Stomach (tissue), 19 donors: ENCODE measurements at regions of chr2 and their contacts with region 1.

Region 1: GRCh38 chr2:229586746-229587705 is 127.3 kb downstream of the DNER start:
- DNase-seq: peak; percentile 75 to 90
- H3K4me3 ChIP-seq: peak overlapping the region; percentile 5 to 26 (median 22)
- H3K27ac ChIP-seq: peak overlapping the region in 1 of 5 donors; percentile 49
- H3K4me1 ChIP-seq: peaks cover 3 to 9% (median 5%) of the 10 kb centered on the region in 4 donors
- H3K27me3 ChIP-seq: peaks cover 0 to 22% (median 0%) of the 10 kb centered on the region in 3 donors
- CTCF ChIP-seq: peak in 5 of 7 experiments; percentile 66 to 80 (median 76)
- EP300 ChIP-seq: no peak
- POLR2A ChIP-seq: no peak

Region 2: GRCh38 chr2:229133155-229133772 is 453.8 kb before region 1 on chr2:
- intact Hi-C with region 1: loop called (anchors 5 kb)
- DNase-seq: peak in 1 of 2 donors; percentile 79
- H3K4me3 ChIP-seq: no peak overlapping the region
- H3K27ac ChIP-seq: no peak overlapping the region
- H3K4me1 ChIP-seq: peaks cover 0 to 13% (median 0%) of the 10 kb centered on the region in 4 donors
- H3K27me3 ChIP-seq: no peaks in the 10 kb centered on the region
- CTCF ChIP-seq: peak in 4 of 7 experiments; percentile 32 to 36 (median 34)
- EP300 ChIP-seq: no peak
- POLR2A ChIP-seq: no peak

Region 3: DNA sequence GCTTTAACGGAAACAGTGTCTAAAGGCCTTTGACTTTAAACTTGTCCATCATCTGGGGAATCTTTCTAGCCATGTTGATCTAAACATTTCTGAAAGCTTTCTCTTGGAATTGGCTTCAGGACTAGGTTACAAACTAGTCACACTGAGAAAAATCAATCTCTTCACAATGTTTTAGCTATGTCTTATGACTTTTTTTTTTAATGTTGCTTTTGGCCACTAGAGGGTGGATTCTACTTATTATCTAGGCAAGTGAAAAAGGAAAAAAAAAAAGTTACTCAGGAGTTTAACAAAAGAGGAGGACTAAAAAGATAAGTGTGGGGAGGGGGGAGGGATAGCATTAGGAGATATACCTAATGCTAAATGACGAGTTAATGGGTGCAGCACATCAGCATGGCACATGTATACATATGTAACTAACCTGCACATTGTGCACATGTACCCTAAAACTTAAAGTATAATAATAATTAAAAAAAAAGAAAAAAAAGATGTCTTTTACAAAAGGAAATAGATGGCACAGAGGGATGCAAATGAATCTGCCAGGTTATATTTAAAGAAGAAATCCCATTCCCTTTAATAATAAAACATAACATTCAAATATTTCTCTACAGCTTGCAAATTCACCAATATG is 155.6 kb before region 1 on chr2:
- intact Hi-C with region 1: loop called (anchors 10 kb)
- DNase-seq: peak in 1 of 2 donors; percentile 66
- H3K4me3 ChIP-seq: no peak overlapping the region
- H3K27ac ChIP-seq: peak overlapping the region in 1 of 5 donors; percentile 58
- H3K4me1 ChIP-seq: peaks cover 0 to 5% (median 0%) of the 10 kb centered on the region in 4 donors
- H3K27me3 ChIP-seq: peaks cover 0 to 4% (median 0%) of the 10 kb centered on the region in 3 donors
- CTCF ChIP-seq: peak in 4 of 7 experiments; percentile 21 to 59 (median 44)
- EP300 ChIP-seq: no peak
- POLR2A ChIP-seq: no peak

Region 4: GRCh38 chr2:229485857-229486256 is 101.2 kb before region 1 on chr2:
- intact Hi-C with region 1: no loop called
- DNase-seq: no peak
- H3K4me3 ChIP-seq: no peak overlapping the region
- H3K27ac ChIP-seq: no peak overlapping the region
- H3K4me1 ChIP-seq: no peaks in the 10 kb centered on the region
- H3K27me3 ChIP-seq: no peaks in the 10 kb centered on the region
- CTCF ChIP-seq: no peak
- EP300 ChIP-seq: no peak
- POLR2A ChIP-seq: no peak

Region 5: DNA sequence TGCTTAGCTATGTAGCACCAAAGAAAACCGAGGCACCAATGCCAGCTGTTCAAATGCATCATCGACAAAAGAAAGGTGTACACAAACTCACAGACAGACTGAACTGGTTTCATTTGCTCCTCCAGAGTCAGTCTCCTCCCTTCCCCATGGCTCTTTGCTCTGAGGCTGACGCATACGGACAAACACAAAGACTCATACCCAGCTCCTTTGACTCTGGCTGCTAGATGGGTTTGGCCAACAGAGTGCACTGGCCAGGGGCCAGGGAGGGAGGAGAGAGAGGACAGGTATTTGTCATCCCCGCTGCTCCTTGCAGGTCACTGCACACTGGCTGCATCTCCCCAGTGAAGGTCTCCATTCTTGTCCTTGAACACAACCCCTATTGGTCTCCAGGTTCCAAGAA is 86.7 kb after region 1 on chr2:
- intact Hi-C with region 1: no loop called
- DNase-seq: no peak
- H3K4me3 ChIP-seq: no peak overlapping the region
- H3K27ac ChIP-seq: no peak overlapping the region
- H3K4me1 ChIP-seq: no peaks in the 10 kb centered on the region
- H3K27me3 ChIP-seq: peaks cover 0 to 51% (median 3%) of the 10 kb centered on the region in 3 donors
- CTCF ChIP-seq: no peak
- EP300 ChIP-seq: no peak
- POLR2A ChIP-seq: no peak